ENCODE measurements at regions of chr6 and their contacts with region 1.

Region 1: GRCh38 chr6:134640975-134641429 is 308.9 kb downstream of the ALDH8A1 start:
- DNase-seq: peak; percentile 66
- H3K4me3 ChIP-seq: no peak overlapping the region
- H3K27me3 ChIP-seq: no peaks in the 10 kb centered on the region
- CTCF ChIP-seq: peak; percentile 91

Region 2: GRCh38 chr6:134174672-134175198 is 466.3 kb before region 1 on chr6:
- CTCF ChIA-PET with region 1: interaction called, 10 read pairs
- POLR2A ChIA-PET with region 1: no interaction called
- DNase-seq: peak; percentile 38
- H3K4me3 ChIP-seq: peak overlapping the region; percentile 79
- H3K27me3 ChIP-seq: no peaks in the 10 kb centered on the region
- CTCF ChIP-seq: 0 out of 2 replicates have a peak, but pooled peaks have one; percentile 2

Region 3: DNA sequence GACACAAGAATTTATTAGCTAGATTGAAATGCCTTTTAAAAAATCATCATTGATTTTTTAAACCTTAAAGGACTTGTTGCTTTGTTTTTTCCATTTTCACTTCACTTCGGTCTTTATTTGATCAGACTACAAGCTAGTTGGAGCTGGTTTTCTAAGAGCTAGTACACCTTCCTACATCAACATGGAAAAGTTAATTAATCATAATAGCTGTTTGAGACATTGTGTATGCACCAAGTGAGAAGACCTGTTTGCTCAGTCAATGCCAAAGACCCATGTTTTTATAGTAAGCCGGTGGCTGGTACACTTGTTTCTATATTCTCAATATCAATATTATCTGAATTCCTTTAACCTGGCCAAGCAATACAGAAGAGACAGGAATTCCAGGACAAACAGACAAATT is 12.8 kb before region 1 on chr6:
- CTCF ChIA-PET with region 1: interaction called, 17 read pairs
- POLR2A ChIA-PET with region 1: no interaction called
- DNase-seq: no peak
- H3K4me3 ChIP-seq: no peak overlapping the region
- H3K27me3 ChIP-seq: peaks cover 1% of the 10 kb centered on the region
- CTCF ChIP-seq: no peak